Left cardiac atrium (tissue), 4 donors: ENCODE measurements at regions of chr3 and their contacts with region 1.

Region 1: GRCh38 chr3:127817396-127817841 is 4.9 kb downstream of the MGLL start:
- DNase-seq: no peak
- ATAC-seq: peak in 1 of 2 donors; percentile 78

Region 2: GRCh38 chr3:127762077-127762786 is 55.2 kb before region 1 on chr3:
- intact Hi-C with region 1: loop called in 1 of 2 experiments (anchors 10 kb)
- DNase-seq: no peak
- ATAC-seq: peak; percentile 70 to 76

Region 3: GRCh38 chr3:127911421-127911931 is 94.1 kb after region 1 on chr3:
- intact Hi-C with region 1: no loop called
- DNase-seq: peak; percentile 31
- ATAC-seq: peak; percentile 39 to 58

Region 4: GRCh38 chr3:128011140-128011539 is 193.7 kb after region 1 on chr3:
- intact Hi-C with region 1: no loop called
- DNase-seq: no peak
- ATAC-seq: peak in 1 of 2 donors; percentile 59